Stomach (tissue), 19 donors: ENCODE measurements at regions of chr12 and their contacts with region 1.

Region 1: DNA sequence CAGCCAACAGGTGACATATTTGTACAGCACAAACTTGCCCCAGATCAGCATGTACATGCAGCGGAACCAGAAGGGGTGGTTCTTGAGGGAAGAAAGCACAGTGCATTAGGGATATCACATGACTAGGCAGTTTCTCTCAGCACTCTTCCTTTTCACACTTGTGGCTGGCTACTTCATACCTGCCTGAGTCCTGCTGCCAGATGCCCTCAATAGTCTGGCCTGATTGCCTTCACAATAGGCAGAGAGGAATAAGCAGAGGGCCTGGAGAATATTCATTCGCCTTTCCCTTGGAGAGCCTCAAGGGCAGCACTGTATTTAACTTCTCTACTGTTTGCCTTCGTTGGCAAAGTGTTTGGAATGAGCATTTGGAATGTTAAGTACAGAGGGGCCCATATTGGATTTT is 7.9 kb downstream of the EMG1 start:
- DNase-seq: peak in 1 of 2 donors; percentile 38
- H3K4me3 ChIP-seq: no peak overlapping the region
- H3K27ac ChIP-seq: peak overlapping the region; percentile 55 to 71 (median 61)
- H3K4me1 ChIP-seq: peaks cover 30 to 44% (median 38%) of the 10 kb centered on the region in 4 donors
- H3K27me3 ChIP-seq: no peaks in the 10 kb centered on the region
- CTCF ChIP-seq: peak in 1 of 7 experiments; percentile 22
- EP300 ChIP-seq: no peak
- POLR2A ChIP-seq: no peak

Region 2: GRCh38 chr12:7012024-7012607 is 33.5 kb after region 1 on chr12:
- intact Hi-C with region 1: loop called (anchors 5 kb)
- DNase-seq: no peak
- H3K4me3 ChIP-seq: no peak overlapping the region
- H3K27ac ChIP-seq: no peak overlapping the region
- H3K4me1 ChIP-seq: peaks cover 1 to 91% (median 50%) of the 10 kb centered on the region in 4 donors
- H3K27me3 ChIP-seq: no peaks in the 10 kb centered on the region
- CTCF ChIP-seq: no peak
- EP300 ChIP-seq: no peak
- POLR2A ChIP-seq: no peak

Region 3: GRCh38 chr12:7210642-7211151 is 232.1 kb after region 1 on chr12:
- intact Hi-C with region 1: no loop called
- DNase-seq: no peak
- H3K4me3 ChIP-seq: no peak overlapping the region
- H3K27ac ChIP-seq: no peak overlapping the region
- H3K4me1 ChIP-seq: no peaks in the 10 kb centered on the region
- H3K27me3 ChIP-seq: no peaks in the 10 kb centered on the region
- CTCF ChIP-seq: no peak
- EP300 ChIP-seq: no peak
- POLR2A ChIP-seq: no peak

Region 4: DNA sequence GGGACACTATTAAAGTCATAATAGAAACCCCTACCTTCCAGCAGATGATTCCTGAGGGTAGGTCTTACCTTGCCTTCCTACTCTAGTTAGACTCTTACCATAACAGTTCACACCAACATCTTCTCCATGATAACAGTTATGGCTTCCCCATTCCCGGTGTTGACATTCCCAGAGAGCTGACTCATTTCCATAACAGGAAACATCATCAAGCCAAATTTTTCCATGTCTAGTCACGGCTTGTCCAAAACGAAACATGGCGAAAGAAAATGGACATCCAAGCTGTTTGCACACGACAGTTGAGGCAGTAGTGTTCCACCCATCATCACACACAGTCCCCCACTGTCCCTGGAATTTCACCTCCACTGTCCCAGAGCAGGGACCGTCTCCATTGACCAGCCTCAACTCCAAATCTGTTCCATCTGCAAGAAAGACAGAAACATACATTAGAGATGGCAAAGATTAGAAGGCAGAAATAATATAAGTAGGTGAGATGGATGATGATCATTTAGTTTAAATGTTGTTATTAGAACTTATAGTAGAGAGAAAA is 454.7 kb after region 1 on chr12:
- intact Hi-C with region 1: no loop called
- DNase-seq: no peak
- H3K4me3 ChIP-seq: no peak overlapping the region
- H3K27ac ChIP-seq: no peak overlapping the region
- H3K4me1 ChIP-seq: no peaks in the 10 kb centered on the region
- H3K27me3 ChIP-seq: peaks cover 0 to 4% (median 0%) of the 10 kb centered on the region in 3 donors
- CTCF ChIP-seq: no peak
- EP300 ChIP-seq: no peak
- POLR2A ChIP-seq: no peak